ENCODE measurements at regions of chr19 and their contacts with region 1.

Region 1: DNA sequence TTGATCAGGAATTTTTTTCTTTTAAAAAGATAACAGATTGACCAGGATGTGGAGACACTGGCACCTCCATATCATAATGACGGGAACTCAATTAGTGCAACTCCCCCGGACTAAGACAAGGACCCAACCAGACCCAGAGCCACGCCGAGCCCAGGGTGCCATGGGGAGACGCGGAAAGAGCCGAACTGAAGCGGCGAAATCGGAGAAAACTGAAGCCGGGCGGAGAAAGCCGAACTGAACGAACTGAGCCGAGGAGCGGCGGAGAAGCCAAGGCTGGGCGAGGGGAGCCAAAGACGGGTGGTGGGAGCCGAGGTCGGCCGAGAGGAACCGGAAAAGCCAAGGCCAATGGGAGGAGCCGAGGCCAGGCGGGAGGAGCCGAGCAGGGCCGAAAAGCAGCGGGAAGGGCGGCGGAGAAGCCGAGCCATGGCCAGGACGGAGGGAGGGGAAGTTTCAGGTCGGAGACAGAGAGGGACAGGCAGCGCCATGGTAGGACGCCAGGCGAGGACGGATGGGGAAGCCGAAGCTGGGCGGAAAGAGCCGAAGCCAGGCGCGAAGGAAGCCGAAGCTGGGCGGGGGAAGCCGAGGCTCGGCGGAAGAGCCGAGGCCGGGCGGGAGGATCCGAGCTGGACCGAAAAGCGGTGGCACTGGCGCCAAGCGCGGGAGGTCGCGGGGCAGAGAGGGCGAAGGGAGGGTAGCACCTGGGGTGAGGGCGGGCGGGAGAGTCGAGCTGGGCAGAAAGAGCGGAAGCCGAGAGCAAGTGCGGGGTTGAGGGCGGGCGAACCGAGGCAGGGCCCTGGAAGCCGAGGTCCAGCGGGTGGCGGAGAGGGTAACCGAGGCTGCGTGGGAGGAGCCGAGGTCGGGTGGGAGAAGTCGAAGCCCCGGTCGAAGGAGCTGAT is 29.4 kb downstream of the ZNF557 start:
- DNase-seq: peak; percentile 65 to 81
- H3K4me3 ChIP-seq: peak overlapping the region; percentile 79
- H3K27ac ChIP-seq: peak overlapping the region; percentile 73
- H3K4me1 ChIP-seq: 0 out of 2 replicates have a peak, but pooled peaks cover 4% of the 10 kb centered on the region
- H3K27me3 ChIP-seq: no peaks in the 10 kb centered on the region
- CTCF ChIP-seq: no peak

Region 2: DNA sequence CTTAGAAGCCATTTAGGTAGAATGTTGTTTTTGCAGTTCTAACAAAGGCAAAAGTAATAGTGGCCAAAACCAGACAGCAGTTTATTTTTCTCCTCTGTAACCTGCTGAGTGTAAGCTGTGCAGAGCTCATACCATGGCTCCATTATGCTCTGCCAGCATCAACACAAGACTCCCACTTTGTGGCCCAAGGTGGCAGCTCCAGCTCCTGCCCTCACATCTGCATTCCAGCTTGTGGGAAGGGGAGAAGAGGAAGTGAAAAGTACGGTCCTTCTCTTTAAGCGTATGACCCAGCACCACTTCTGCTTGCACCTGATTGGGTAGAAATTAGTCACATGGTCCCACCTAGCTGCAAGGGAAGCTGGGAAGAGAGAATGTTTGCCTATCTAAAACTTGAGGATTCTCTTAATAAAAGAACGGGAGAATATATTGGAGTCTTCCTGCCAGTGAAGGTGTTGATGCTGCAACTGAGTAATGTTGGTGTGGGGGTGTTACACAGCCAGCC is 192.3 kb before region 1 on chr19:
- CTCF ChIA-PET with region 1: no interaction called
- POLR2A ChIA-PET with region 1: no interaction called
- intact Hi-C with region 1: no loop called
- DNase-seq: no peak
- H3K4me3 ChIP-seq: no peak overlapping the region
- H3K27ac ChIP-seq: no peak overlapping the region
- H3K4me1 ChIP-seq: no peaks in the 10 kb centered on the region
- H3K27me3 ChIP-seq: peaks cover 20% of the 10 kb centered on the region
- CTCF ChIP-seq: no peak

Region 3: GRCh38 chr19:6947745-6948144 is 151.2 kb before region 1 on chr19:
- CTCF ChIA-PET with region 1: no interaction called
- POLR2A ChIA-PET with region 1: interaction called, 14 read pairs
- intact Hi-C with region 1: no loop called
- DNase-seq: no peak
- H3K4me3 ChIP-seq: no peak overlapping the region
- H3K27ac ChIP-seq: no peak overlapping the region
- H3K4me1 ChIP-seq: no peaks in the 10 kb centered on the region
- H3K27me3 ChIP-seq: peaks cover 11% of the 10 kb centered on the region
- CTCF ChIP-seq: no peak

Region 4: DNA sequence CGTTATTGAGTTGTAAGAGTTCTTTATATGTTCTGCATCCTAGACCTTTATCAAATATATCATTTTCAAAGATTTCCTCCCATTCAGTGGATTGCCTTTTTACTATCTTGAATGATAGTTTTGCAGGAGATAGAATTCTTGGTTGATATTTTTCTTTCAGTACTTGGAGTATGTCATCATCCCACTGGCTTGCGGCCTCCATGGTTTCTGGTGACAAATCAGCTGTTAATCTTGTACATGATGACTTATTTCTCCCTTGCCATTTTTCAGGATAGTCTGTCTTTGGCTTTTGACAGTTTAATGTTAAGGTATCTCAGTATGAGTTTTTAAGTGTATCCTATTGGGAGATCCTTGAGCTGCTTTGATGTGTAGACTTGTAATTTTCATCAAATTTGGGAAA is 20.9 kb before region 1 on chr19:
- CTCF ChIA-PET with region 1: no interaction called
- POLR2A ChIA-PET with region 1: no interaction called
- intact Hi-C with region 1: no loop called
- DNase-seq: no peak
- H3K4me3 ChIP-seq: no peak overlapping the region
- H3K27ac ChIP-seq: no peak overlapping the region
- H3K4me1 ChIP-seq: no peaks in the 10 kb centered on the region
- H3K27me3 ChIP-seq: no peaks in the 10 kb centered on the region
- CTCF ChIP-seq: no peak

Region 5: GRCh38 chr19:7152568-7152967 is 53.6 kb after region 1 on chr19:
- CTCF ChIA-PET with region 1: no interaction called
- POLR2A ChIA-PET with region 1: no interaction called
- intact Hi-C with region 1: loop called (anchors 2 kb)
- DNase-seq: no peak
- H3K4me3 ChIP-seq: no peak overlapping the region
- H3K27ac ChIP-seq: no peak overlapping the region
- H3K4me1 ChIP-seq: no peaks in the 10 kb centered on the region
- H3K27me3 ChIP-seq: no peaks in the 10 kb centered on the region
- CTCF ChIP-seq: no peak

Region 6: DNA sequence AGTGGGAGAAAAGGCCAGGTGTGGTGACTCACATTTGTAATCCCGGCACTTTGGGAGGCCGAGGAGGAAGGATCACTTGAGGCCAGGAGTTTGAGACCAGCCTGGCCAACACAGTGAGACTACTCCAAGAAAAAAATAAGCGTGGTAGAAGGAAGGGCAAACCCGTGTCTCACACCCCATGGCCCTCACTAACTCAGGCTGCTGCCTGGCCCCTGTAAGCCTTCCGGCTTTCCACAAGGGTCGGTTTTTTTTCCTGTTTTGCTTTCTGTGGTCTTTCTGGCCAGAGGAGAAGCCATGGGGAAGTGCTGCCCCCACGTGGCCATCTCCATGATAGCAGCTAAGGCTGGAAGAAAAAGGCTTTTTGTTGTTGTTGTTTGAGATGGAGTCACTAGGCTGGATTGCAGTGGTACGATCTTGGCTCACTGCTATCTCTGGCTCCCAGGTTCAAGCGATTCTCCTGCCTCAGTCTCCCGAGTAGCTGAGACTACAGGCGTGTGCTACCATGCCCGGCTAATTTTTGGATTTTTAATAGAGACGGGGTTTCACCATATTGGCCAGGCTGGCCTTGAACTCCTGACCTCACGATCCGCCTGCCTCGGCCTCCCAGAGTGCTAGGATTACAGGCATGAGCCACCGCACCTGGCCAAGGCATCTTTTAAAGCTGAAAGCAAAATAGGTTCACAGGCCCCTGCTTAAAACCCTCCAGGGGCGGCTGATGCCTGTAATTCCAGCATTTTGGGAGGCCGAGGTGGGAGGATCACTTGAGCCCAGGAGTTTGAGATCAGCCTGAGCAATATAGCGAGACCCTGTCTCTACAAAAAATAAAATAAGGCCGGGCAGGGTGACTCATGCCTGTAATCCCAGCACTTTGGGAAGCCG is 242.2 kb after region 1 on chr19:
- CTCF ChIA-PET with region 1: interaction called, 7 read pairs
- POLR2A ChIA-PET with region 1: no interaction called
- intact Hi-C with region 1: loop called (anchors 1 kb)
- DNase-seq: peak in 1 of 2 experiments; percentile 65
- H3K4me3 ChIP-seq: no peak overlapping the region
- H3K27ac ChIP-seq: no peak overlapping the region
- H3K4me1 ChIP-seq: no peaks in the 10 kb centered on the region; the same call in 1 of the 2 replicates
- H3K27me3 ChIP-seq: no peaks in the 10 kb centered on the region
- CTCF ChIP-seq: peak; percentile 90

Measured in PC-9 (cell line).